ENCODE measurements at regions of chr5 and their contacts with region 1.

Region 1: DNA sequence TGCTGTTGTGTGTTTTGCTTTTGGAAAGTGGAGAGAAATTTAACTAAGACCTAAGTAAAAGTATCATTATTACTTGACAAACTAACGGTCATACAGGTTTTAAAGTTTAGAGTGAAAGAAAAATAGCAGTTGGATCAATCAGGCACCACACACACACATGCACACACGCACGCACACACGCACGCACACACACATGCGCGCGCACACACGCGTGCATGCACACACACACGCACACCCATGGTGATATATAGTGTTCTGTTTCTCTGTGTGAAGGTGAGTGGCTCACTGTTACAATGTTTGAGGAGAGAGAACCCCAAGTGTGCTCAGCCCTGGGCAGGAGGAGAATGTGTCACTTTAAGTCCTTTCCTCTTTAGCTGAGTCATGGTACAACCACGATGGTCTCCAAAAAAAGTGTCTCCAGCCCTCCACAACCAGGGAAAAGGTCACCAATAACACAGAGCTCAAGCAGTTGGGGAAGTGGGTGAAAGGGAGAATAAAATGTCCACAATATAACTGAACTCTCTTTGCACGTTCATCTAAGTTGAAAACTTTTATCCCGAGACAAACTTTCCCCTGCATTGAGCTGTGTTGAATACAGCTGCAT is 3.2 kb downstream of the ZNF366 start:
- DNase-seq: no peak
- ATAC-seq: no peak
- H3K4me3 ChIP-seq: no peak overlapping the region
- H3K27ac ChIP-seq: no peak overlapping the region
- H3K4me1 ChIP-seq: peaks cover 21% of the 10 kb centered on the region
- H3K27me3 ChIP-seq: no peaks in the 10 kb centered on the region
- CTCF ChIP-seq: no peak
- EP300 ChIP-seq: no peak
- POLR2A ChIP-seq: no peak
- RAD21 ChIP-seq: no peak

Region 2: DNA sequence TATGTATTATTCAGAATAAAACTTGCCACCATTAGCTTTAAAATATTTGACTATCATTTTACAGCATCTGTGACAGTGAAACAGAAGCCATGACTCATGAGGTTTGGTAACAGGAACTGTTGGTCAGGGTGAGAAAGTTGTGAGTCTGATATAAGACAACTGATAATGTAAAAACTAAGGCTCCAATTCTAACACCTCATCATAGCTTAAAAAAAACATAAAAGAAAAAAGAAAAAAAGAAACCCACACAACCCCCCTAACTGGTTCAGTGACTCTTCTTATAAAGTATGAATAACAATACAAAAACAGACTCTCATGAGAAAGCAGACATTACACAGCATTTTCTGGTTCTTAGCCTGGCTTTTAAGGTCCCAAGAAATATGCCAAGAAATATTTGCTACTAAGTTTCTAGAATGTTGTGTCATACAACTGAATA is 269.7 kb before region 1 on chr5:
- CTCF ChIA-PET with region 1: no interaction called
- POLR2A ChIA-PET with region 1: no interaction called
- RAD21 ChIA-PET with region 1: no interaction called
- SMC1A ChIA-PET with region 1: no interaction called
- in situ Hi-C with region 1: no loop called
- intact Hi-C with region 1: no loop called
- DNase-seq: peak; percentile 52
- ATAC-seq: peak; percentile 96
- H3K4me3 ChIP-seq: no peak overlapping the region
- H3K27ac ChIP-seq: peak overlapping the region; percentile 32
- H3K4me1 ChIP-seq: peaks cover 32% of the 10 kb centered on the region
- H3K27me3 ChIP-seq: no peaks in the 10 kb centered on the region
- CTCF ChIP-seq: no peak
- EP300 ChIP-seq: peak; percentile 54 to 81; a peak in 2 of 4 replicates
- POLR2A ChIP-seq: no peak
- RAD21 ChIP-seq: no peak

Region 3: DNA sequence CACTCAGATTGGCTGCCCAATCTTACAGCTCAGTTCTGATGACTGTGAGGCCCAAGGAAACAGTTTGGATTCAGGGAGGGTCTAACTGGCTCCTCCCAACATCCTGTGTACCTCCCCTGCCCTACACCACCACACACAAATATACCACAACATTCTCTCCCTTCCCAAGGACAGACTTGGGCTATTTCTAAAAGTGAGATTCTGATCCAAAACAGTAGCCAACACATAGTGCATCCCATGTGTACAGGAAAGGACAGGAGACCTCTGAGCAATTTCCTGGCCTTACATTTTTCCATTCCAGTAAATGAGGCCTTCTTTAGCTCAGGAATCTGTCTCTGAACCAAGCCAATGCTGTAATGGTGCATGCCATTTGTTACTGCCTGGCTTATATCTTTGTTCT is 17.6 kb before region 1 on chr5:
- CTCF ChIA-PET with region 1: interaction called, 5 read pairs
- POLR2A ChIA-PET with region 1: interaction called, 8 read pairs
- RAD21 ChIA-PET with region 1: no interaction called
- SMC1A ChIA-PET with region 1: interaction called, 37 read pairs
- in situ Hi-C with region 1: no loop called
- intact Hi-C with region 1: no loop called
- DNase-seq: no peak
- ATAC-seq: no peak
- H3K4me3 ChIP-seq: no peak overlapping the region
- H3K27ac ChIP-seq: no peak overlapping the region
- H3K4me1 ChIP-seq: no peaks in the 10 kb centered on the region
- H3K27me3 ChIP-seq: no peaks in the 10 kb centered on the region
- CTCF ChIP-seq: no peak
- EP300 ChIP-seq: no peak
- POLR2A ChIP-seq: no peak
- RAD21 ChIP-seq: no peak

Measured in GM12878 (cell line).